Activated naive CD4-positive, alpha-beta T cell treated with anti-CD3 and anti-CD28 coated beads for 36 hours (primary cell): ENCODE measurements at regions of chr2 and their contacts with region 1.

Region 1: DNA sequence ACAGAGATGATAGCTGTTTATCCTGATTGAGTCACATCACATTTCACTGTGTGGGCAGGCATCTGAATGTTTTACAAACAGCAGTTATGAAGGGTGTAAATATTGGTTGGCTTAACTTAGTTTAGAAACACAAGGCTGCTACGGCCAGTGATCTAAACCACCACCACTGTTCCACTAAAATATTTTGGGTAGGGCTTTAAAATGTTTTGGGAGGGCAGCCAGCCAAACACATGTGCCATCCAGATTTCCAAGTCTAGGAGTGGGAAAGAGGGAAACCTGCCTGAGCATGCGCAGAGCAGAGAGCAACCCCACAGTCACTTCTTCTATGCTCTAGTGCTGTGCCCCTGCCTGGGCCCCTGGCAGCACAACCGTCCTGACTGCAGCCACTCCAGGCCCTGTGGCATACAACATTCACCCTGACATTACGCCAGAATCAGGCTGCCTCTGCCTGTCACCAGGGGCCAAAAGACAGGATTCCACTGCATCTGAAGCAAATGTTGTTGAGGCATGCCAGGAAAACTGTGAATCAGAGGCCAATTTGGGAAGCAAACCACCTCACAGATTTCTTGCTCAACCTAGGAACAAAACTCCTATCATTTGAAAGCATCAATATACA is 74.8 kb upstream of the COL5A2 start:
- DNase-seq: no peak
- H3K4me3 Mint-ChIP-seq: no peak overlapping the region
- H3K27ac Mint-ChIP-seq: no peak overlapping the region
- H3K4me1 Mint-ChIP-seq: peaks cover 38% of the 10 kb centered on the region
- H3K27me3 Mint-ChIP-seq: no peaks in the 10 kb centered on the region

Region 2: DNA sequence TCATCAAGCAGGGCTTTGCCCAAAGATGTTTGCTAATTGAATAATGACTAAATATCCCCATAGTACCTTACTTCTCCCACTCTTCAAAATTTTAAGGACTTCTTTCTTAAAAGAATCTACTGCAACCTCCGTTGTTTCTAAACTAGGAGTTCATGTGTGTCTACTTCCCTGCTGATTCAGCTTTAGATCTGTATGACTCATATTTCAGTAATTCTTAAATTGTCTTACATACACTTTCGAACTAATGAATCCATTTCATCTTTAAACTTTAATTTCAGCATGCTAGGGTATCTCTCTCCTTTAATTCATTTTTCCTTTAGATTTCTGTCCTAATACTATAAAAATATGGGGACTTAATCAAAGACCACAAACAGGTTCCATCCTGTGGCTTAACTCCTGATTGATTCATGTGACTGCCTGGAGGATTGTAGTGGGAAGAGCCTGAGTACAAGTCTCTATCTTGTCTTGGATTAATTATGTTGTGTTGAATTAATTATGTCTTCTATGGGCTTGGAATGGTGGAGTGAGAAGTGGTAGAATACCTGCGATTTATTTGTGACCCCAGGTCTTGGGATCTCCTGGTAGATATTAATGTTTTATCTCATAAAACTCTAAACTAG is 49.9 kb before region 1 on chr2:
- CTCF ChIA-PET with region 1: no interaction called
- intact Hi-C with region 1: loop called (anchors 2 kb)
- DNase-seq: no peak
- H3K4me3 Mint-ChIP-seq: peak overlapping the region; percentile 3
- H3K27ac Mint-ChIP-seq: peak overlapping the region; percentile 65
- H3K4me1 Mint-ChIP-seq: peaks cover 26% of the 10 kb centered on the region
- H3K27me3 Mint-ChIP-seq: no peaks in the 10 kb centered on the region

Region 3: DNA sequence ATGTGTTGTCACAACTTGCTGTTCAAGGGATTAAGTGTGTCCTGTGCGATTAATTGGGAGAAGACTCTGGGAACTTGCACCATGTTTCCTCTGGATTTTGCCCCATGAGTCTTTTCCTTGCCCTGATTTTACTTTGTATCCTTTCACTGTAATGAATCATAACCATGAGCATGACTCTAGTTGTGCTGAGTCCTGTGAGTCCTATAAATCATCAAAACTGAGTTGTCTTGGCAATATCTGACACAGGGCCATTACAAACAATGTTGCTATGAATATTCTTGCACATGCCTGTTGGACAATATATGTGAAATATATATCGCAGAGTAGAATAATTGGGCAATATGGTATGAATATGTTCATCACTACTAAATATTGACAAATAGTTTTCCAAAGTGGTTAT is 18.3 kb before region 1 on chr2:
- CTCF ChIA-PET with region 1: interaction called, 3 read pairs
- intact Hi-C with region 1: loop called (anchors 2 kb)
- DNase-seq: no peak
- H3K4me3 Mint-ChIP-seq: no peak overlapping the region
- H3K27ac Mint-ChIP-seq: no peak overlapping the region
- H3K4me1 Mint-ChIP-seq: peaks cover 27% of the 10 kb centered on the region
- H3K27me3 Mint-ChIP-seq: no peaks in the 10 kb centered on the region